ENCODE measurements at regions of chr1 and their contacts with region 1.

Region 1: DNA sequence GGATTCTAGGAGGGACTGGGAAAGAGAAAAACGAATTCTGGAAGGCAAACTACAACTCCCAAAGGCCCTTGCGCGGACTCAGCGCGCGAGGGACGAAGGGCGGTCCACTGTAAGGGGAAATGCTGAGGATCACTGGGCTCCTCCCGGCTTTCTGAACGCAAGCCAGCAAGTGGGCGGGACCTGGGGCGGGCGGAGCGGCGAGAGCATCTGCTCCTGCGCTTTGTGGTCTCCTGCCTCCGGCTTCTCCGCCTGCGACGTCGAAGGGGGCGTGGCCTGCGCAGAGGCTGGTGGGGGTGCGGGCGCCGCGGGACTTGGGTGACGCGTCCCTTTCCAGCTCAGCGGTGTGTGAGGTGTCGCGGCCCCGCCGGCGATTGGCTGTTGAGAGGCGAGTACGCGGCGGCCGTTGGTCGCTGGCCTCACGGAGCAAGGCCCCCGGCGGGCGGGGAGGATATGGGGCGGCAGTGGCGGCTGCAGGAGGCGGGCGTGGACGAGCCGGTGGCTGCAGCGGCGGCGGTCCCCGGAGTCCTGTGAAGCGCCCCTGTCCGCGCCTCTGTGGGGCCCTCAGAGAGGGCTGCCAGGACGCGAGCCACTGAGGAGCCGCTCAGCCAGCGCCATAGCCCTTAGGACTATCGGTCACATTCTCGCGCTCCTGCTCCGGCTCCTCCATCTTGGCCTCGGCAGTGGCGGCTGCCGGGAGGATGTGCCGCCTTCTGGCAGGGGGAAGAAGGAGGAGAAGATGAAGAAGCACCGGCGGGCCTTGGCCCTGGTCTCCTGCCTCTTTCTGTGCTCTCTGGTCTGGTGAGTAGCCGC is at the start of gene SUCO:
- DNase-seq: peak; percentile 100
- H3K4me3 Mint-ChIP-seq: peak within 1 kb of the TSS; percentile 98
- H3K27ac Mint-ChIP-seq: peak within 1 kb of the TSS; percentile 99
- H3K4me1 Mint-ChIP-seq: peaks cover 48% of the 10 kb centered on the region
- H3K27me3 Mint-ChIP-seq: peaks cover 7% of the 10 kb centered on the region
- total RNA-seq, gene SUCO: 39.3 and 40.4 TPM in 2 replicates

Region 2: GRCh38 chr1:171781176-171781875 is 751.6 kb before region 1 on chr1 and contains the start of gene METTL13:
- intact Hi-C with region 1: loop called (anchors 1 kb)
- DNase-seq: peak; percentile 99
- H3K4me3 Mint-ChIP-seq: peak within 1 kb of the TSS; percentile 93
- H3K27ac Mint-ChIP-seq: peak within 1 kb of the TSS; percentile 88
- H3K4me1 Mint-ChIP-seq: peaks cover 57% of the 10 kb centered on the region
- H3K27me3 Mint-ChIP-seq: no peaks in the 10 kb centered on the region
- total RNA-seq, gene METTL13: 55.6 and 56.5 TPM in 2 replicates

Region 3: GRCh38 chr1:172588296-172589291 is 55.7 kb after region 1 on chr1:
- intact Hi-C with region 1: loop called (anchors 2 kb)
- DNase-seq: no peak
- H3K4me3 Mint-ChIP-seq: peak overlapping the region; percentile 32
- H3K27ac Mint-ChIP-seq: peak overlapping the region; percentile 83
- H3K4me1 Mint-ChIP-seq: peaks cover 20% of the 10 kb centered on the region
- H3K27me3 Mint-ChIP-seq: no peaks in the 10 kb centered on the region

Region 4: DNA sequence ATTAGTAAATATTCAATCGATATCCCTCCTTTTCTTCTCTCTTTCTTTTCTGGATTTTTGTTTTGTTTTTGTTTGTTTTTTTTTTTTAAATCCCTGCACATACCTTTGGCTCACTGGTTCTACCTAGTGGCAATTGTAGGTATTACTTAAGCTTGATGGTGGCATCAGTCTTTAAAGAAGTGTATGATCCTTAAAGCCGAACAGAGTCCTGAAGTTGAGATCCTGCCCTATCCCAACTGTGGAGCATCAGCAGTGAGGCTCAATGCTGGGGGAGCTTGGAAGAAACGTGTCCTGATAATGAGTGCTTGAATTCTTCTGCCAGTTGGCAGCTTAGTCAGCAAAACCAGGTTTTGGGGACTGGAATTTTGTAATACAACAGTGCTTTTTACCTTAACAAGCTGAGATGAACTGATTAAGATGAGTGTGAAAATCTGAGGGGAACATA is 186.8 kb after region 1 on chr1:
- intact Hi-C with region 1: loop called (anchors 2 kb)
- DNase-seq: no peak
- H3K4me3 Mint-ChIP-seq: peak overlapping the region; percentile 6
- H3K27ac Mint-ChIP-seq: peak overlapping the region; percentile 73
- H3K4me1 Mint-ChIP-seq: peaks cover 49% of the 10 kb centered on the region
- H3K27me3 Mint-ChIP-seq: no peaks in the 10 kb centered on the region

Region 5: GRCh38 chr1:173714759-173715537 is 1182.0 kb after region 1 on chr1 and contains the start of gene KLHL20:
- intact Hi-C with region 1: loop called (anchors 1 kb)
- DNase-seq: peak; percentile 84
- H3K4me3 Mint-ChIP-seq: peak within 1 kb of the TSS; percentile 93
- H3K27ac Mint-ChIP-seq: peak within 1 kb of the TSS; percentile 98
- H3K4me1 Mint-ChIP-seq: peaks cover 30% of the 10 kb centered on the region
- H3K27me3 Mint-ChIP-seq: peaks cover 14% of the 10 kb centered on the region
- total RNA-seq, gene KLHL20: 17.8 and 18.3 TPM in 2 replicates

Region 6: GRCh38 chr1:174159252-174160108 is 1626.6 kb after region 1 on chr1 and contains the start of gene RABGAP1L:
- intact Hi-C with region 1: loop called (anchors 5 kb)
- DNase-seq: peak; percentile 89
- H3K4me3 Mint-ChIP-seq: peak within 1 kb of the TSS; percentile 96
- H3K27ac Mint-ChIP-seq: peak within 1 kb of the TSS; percentile 96
- H3K4me1 Mint-ChIP-seq: peaks cover 66% of the 10 kb centered on the region
- H3K27me3 Mint-ChIP-seq: no peaks in the 10 kb centered on the region
- total RNA-seq, gene RABGAP1L: 40.6 and 41.0 TPM in 2 replicates

Measured in activated T-helper 1 cell treated with anti-CD3 and anti-CD28 coated beads, Interleukin-12 subunit alpha, Interleukin-12 subunit beta, Interleukin-2, Interleukin-4 antibody, amounts not matched to agents 30 ng/mL and 10 ng/mL and 1 ng/mL, durations not matched to agents 14 hours and 24 hours and 36 hours (primary cell).